Prostate gland (tissue), 2 donors: ENCODE measurements at regions of chr5 and their contacts with region 1.

Region 1: DNA sequence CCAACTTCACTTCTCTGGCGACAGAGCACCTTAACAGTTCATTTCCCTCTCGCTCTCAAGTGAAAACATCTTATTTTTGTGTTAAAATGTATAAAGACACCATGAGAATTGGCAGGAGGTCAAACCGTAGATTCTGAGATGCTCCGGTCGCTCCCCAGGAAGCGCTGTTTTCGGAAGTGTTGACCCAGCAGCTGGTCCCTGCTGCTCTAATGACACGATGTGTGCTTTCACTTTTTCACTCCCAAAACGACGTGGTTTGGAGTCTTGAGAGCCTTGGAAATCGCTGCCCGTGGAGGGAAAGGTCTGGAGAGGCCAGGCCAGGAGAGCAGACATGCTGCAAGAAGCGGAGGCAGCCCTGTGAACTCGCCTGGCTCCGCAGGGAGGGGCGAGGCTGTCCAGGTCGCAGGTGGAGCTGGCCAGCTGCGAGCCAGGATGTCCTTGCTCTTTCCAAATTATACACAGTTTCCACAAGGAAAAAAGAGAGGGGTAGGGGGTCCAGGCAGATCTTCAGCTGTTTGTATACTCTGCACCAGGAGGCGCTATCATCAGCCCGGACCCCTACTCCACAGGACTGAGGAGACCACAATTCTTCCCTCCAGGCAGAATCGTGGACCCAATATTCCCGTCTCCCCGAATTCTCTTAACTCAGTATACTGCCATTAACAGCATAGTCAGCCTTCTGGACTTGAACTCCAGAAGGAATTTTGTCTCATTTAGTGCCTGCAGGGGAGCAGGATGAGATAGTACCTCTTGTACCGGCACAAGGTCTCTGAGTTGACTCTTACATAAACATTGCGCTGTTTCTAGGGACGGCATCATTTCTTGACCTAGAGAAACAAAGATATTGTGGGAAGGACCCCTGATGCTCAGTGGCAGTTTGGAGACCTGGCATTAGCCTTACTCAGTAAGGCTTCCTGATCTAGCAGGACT is 248.6 kb upstream of the ANKRD55 start:
- DNase-seq: peak; percentile 22
- H3K4me3 ChIP-seq: peak overlapping the region; percentile 54 to 55
- H3K27ac ChIP-seq: peak overlapping the region; percentile 83 to 84
- H3K4me1 ChIP-seq: no peaks in the 10 kb centered on the region
- H3K27me3 ChIP-seq: no peaks in the 10 kb centered on the region
- CTCF ChIP-seq: peak in 2 of 4 experiments; percentile 3 to 13
- POLR2A ChIP-seq: no peak

Region 2: GRCh38 chr5:56270568-56271392 is 210.9 kb before region 1 on chr5:
- intact Hi-C with region 1: loop called (anchors 10 kb)
- DNase-seq: peak; percentile 78
- H3K4me3 ChIP-seq: no peak overlapping the region
- H3K27ac ChIP-seq: no peak overlapping the region
- H3K4me1 ChIP-seq: no peaks in the 10 kb centered on the region
- H3K27me3 ChIP-seq: no peaks in the 10 kb centered on the region
- CTCF ChIP-seq: peak; percentile 86 to 96 (median 92)
- POLR2A ChIP-seq: no peak

Region 3: DNA sequence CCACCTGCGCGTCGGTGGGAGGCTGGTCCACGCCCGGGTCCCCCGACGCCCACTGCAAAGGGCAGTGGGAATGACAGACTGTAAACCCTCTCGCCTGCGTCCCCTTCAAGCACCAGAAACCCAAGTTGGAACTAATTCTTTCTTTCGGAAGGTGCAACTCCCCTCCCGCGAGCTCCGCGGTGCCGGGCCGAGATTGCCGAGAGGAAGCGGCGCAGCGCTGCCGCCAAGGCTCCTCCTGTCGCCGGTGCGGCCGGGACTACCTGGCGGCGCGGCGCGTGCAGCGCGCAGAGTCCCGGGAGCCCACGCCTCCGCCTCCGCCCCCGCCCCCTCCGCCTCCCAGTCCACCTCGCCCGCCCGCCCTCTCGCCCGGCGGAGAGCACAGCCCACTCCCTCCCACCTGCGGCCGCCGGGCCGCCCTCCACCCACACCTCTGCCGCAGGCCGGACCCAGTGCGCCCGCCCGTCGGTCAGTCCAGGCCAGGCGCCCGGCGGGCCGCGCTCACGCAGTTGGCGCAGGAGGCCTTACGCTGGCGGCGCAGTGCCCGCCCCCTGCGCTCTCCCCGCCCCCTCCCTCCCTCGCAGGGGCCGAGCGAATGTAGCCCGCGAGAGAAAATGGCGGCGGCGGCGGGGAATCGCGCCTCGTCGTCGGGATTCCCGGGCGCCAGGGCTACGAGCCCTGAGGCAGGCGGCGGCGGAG is 333.4 kb after region 1 on chr5 and contains the start of gene MAP3K1:
- intact Hi-C with region 1: loop called (anchors 10 kb)
- DNase-seq: peak; percentile 90
- H3K4me3 ChIP-seq: peak within 1 kb of the TSS; percentile 90 to 96
- H3K27ac ChIP-seq: peak within 1 kb of the TSS; percentile 89 to 98
- H3K4me1 ChIP-seq: no peaks in the 10 kb centered on the region
- H3K27me3 ChIP-seq: no peaks in the 10 kb centered on the region
- CTCF ChIP-seq: peak in 2 of 4 experiments; percentile 43 to 52
- POLR2A ChIP-seq: peak; percentile 42
- total RNA-seq, gene MAP3K1: 31.7 to 40.6 TPM

Region 4: DNA sequence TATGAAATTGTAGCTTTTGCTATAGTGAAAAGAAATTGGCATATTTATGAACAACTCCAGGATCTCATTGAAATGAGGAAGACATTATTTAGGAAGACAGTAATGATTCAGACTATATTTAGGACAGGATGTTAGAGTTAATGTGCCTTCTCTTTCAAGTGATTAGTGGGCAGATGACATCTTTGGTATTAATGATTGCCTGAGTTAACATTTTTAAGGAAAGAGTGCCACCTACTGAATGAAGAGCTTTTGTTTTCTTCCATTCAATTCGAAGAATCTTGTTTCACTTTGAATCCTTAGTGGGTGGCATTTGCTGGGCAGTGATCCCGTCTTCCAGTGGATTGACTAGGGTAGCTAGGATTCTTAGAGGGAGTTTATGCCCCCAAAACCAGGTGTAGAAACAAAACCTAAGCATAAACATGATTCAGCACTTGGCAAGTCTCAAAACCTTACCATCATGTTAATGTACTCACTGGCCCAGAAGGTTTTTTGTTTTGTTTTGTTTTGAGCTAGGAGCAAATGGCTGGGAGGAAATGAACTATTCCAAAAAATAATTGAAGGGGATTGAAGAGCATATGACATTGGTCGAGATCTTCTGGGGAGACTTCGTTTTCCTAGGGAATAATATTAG is 356.8 kb after region 1 on chr5:
- intact Hi-C with region 1: loop called (anchors 10 kb)
- DNase-seq: no peak
- H3K4me3 ChIP-seq: no peak overlapping the region
- H3K27ac ChIP-seq: no peak overlapping the region
- H3K4me1 ChIP-seq: no peaks in the 10 kb centered on the region
- H3K27me3 ChIP-seq: no peaks in the 10 kb centered on the region
- CTCF ChIP-seq: peak in 3 of 4 experiments; percentile 55 to 72 (median 70)
- POLR2A ChIP-seq: no peak